ENCODE measurements at regions of chr17 and their contacts with region 1.

Region 1: GRCh38 chr17:4143563-4144421 is 795 bp downstream of the CYB5D2 start:
- DNase-seq: peak; percentile 58 to 95
- H3K4me3 ChIP-seq: peak overlapping the region; percentile 91 to 96
- H3K27ac ChIP-seq: peak overlapping the region; percentile 99 to 100
- H3K4me1 ChIP-seq: peaks cover 6 to 21% of the 10 kb centered on the region in 2 donors
- H3K27me3 ChIP-seq: no peaks in the 10 kb centered on the region
- CTCF ChIP-seq: no peak

Region 2: GRCh38 chr17:3893003-3893719 is 250.6 kb before region 1 on chr17 and contains the start of gene CAMKK1:
- intact Hi-C with region 1: loop called (anchors 5 kb)
- DNase-seq: peak; percentile 54 to 91
- H3K4me3 ChIP-seq: peak within 1 kb of the TSS; percentile 83 to 87
- H3K27ac ChIP-seq: peak within 1 kb of the TSS; percentile 66 to 73
- H3K4me1 ChIP-seq: peaks cover 20 to 52% of the 10 kb centered on the region in 2 donors
- H3K27me3 ChIP-seq: no peaks in the 10 kb centered on the region
- CTCF ChIP-seq: no peak
- total RNA-seq, gene CAMKK1: 3.6 TPM

Region 3: GRCh38 chr17:4175921-4176807 is 32.4 kb after region 1 on chr17:
- intact Hi-C with region 1: no loop called
- DNase-seq: no peak
- H3K4me3 ChIP-seq: no peak overlapping the region
- H3K27ac ChIP-seq: no peak overlapping the region
- H3K4me1 ChIP-seq: no peaks in the 10 kb centered on the region
- H3K27me3 ChIP-seq: no peaks in the 10 kb centered on the region
- CTCF ChIP-seq: no peak

Region 4: DNA sequence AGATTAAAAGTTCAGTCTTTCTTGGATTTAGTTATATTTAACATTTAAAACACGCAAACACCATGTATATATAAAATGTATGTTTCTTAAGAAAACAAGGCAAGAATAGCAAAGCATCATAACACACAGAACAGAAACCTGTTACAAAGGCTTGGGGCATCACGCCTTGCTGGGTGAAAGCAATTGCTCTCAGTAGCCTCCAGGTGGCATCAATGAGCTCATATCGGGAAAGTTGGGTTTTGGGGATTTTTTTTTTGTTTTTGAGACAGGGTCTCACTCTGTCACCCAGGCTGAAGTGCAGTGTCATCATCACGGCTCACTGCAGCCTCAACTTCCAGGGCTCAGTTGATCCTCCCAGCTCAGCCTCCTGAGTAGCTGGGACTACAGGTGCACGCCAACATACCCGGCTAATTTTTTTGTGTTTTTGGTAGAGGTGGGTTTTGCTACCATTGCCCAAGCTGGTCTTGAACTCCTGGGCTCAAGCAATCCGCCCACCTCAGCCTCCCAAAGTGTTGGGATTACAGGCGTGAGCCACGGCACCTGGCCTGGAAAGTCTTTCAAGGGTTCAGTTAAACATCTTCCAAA is 56.1 kb after region 1 on chr17:
- intact Hi-C with region 1: loop called (anchors 5 kb)
- DNase-seq: peak in 1 of 2 donors; percentile 59
- H3K4me3 ChIP-seq: no peak overlapping the region
- H3K27ac ChIP-seq: no peak overlapping the region
- H3K4me1 ChIP-seq: peaks cover 0 to 11% of the 10 kb centered on the region in 2 donors
- H3K27me3 ChIP-seq: no peaks in the 10 kb centered on the region
- CTCF ChIP-seq: peak; percentile 43 to 74 (median 70)

Region 5: GRCh38 chr17:4263282-4264215 is 119.8 kb after region 1 on chr17 and contains the start of gene ANKFY1:
- intact Hi-C with region 1: loop called (anchors 10 kb)
- DNase-seq: peak; percentile 83 to 98
- H3K4me3 ChIP-seq: peak within 1 kb of the TSS; percentile 87 to 100
- H3K27ac ChIP-seq: peak within 1 kb of the TSS; percentile 77 to 83
- H3K4me1 ChIP-seq: peaks cover 11 to 25% of the 10 kb centered on the region in 2 donors
- H3K27me3 ChIP-seq: no peaks in the 10 kb centered on the region
- CTCF ChIP-seq: peak in 2 of 3 experiments; percentile 17 to 40
- total RNA-seq, gene ANKFY1: 16.2 TPM

Region 6: DNA sequence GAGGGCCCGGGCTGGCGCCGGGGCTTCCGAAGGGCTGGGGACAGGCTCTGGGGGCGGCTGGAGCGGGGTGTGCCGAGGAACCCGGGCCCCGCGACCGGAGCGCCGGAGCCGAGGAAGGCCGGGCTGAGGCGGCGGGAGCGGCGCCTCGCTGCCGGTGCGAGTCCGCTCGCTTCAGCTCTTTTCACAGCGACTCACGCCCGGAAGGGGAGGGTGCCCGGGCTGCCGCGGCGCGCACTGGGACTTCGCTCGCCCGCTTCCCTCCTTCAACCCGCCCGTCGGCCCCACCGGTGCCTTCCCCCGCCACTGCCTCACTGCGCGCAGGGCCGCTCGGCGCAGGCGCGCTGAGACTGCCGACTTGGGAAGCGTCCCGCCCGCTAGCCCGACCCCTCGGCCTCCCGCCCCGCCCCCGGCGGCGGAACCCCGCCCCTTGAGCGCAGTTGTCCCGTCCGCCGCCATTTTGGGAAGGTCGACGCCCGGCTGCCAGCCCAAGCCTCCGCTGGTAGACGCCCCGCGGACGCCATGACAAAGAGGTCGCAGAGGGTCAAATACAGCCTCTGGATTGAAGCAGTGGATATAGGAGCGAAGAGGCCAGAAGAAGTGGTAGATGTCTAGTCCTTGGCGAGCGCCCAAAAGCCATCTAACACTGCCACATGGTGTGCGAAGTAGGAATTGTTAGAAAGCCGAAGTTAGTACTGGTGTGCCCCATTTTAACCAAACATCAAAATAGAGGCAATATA is 222.7 kb after region 1 on chr17 and contains the start of gene UBE2G1:
- intact Hi-C with region 1: loop called (anchors 2 kb)
- DNase-seq: peak; percentile 87 to 99
- H3K4me3 ChIP-seq: peak within 1 kb of the TSS; percentile 86 to 93
- H3K27ac ChIP-seq: peak within 1 kb of the TSS; percentile 93 to 98
- H3K4me1 ChIP-seq: peaks cover 6 to 18% of the 10 kb centered on the region in 2 donors
- H3K27me3 ChIP-seq: no peaks in the 10 kb centered on the region
- CTCF ChIP-seq: peak; percentile 8 to 36 (median 21)
- total RNA-seq, gene UBE2G1: 27.9 TPM

Region 7: DNA sequence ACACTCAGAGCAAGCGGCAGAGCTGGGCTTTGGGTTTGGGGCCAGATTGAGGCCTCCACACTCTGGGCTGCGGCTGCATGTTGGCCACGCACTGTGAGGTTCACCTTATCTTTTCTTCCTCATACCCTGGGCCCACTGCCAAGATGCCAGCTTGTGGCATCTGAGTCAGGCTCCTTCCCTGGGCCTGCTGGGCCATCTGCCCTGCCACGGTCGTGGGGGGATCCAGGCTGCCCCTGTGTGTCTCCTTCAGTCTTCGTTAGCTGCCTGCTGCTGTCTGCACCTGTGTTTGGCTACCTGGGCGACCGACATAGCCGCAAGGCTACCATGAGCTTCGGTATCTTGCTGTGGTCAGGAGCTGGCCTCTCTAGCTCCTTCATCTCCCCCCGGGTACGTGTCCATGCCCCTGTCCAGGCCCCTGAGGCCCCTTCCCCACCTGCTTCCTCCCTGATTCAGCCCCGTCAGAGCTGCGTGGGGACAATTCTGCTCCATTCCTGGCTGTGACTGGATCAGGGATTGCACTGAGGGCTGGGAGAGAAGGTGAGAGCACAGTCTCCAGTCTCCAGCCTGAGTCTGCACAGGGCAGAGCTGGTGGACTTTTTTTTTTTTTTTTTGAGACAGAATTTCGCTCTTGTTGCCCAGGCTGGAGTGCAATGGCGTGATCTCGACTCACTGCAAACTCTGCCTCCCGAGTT is 301.1 kb after region 1 on chr17:
- intact Hi-C with region 1: no loop called
- DNase-seq: peak in 1 of 2 donors; percentile 67
- H3K4me3 ChIP-seq: no peak overlapping the region
- H3K27ac ChIP-seq: no peak overlapping the region
- H3K4me1 ChIP-seq: no peaks in the 10 kb centered on the region
- H3K27me3 ChIP-seq: no peaks in the 10 kb centered on the region
- CTCF ChIP-seq: no peak

Region 8: GRCh38 chr17:4967539-4968165 is 823.9 kb after region 1 on chr17 and contains the start of gene SPAG7:
- intact Hi-C with region 1: loop called (anchors 5 kb)
- DNase-seq: peak; percentile 63 to 96
- H3K4me3 ChIP-seq: peak within 1 kb of the TSS; percentile 77 to 78
- H3K27ac ChIP-seq: peak within 1 kb of the TSS; percentile 94
- H3K4me1 ChIP-seq: peaks cover 9 to 25% of the 10 kb centered on the region in 2 donors
- H3K27me3 ChIP-seq: no peaks in the 10 kb centered on the region
- CTCF ChIP-seq: peak in 1 of 3 experiments; percentile 3
- total RNA-seq, gene SPAG7: 4.9 TPM

Measured in ascending aorta (tissue), 2 donors.